A673 (cell line): ENCODE measurements at regions of chr9 and their contacts with region 1.

Region 1: GRCh38 chr9:38362852-38363593 is 29.5 kb upstream of the ALDH1B1 start:
- DNase-seq: peak; percentile 69
- H3K4me3 ChIP-seq: no peak overlapping the region
- H3K27ac ChIP-seq: no peak overlapping the region
- H3K4me1 ChIP-seq: no peaks in the 10 kb centered on the region
- H3K27me3 ChIP-seq: no peaks in the 10 kb centered on the region
- CTCF ChIP-seq: peak; percentile 72

Region 2: DNA sequence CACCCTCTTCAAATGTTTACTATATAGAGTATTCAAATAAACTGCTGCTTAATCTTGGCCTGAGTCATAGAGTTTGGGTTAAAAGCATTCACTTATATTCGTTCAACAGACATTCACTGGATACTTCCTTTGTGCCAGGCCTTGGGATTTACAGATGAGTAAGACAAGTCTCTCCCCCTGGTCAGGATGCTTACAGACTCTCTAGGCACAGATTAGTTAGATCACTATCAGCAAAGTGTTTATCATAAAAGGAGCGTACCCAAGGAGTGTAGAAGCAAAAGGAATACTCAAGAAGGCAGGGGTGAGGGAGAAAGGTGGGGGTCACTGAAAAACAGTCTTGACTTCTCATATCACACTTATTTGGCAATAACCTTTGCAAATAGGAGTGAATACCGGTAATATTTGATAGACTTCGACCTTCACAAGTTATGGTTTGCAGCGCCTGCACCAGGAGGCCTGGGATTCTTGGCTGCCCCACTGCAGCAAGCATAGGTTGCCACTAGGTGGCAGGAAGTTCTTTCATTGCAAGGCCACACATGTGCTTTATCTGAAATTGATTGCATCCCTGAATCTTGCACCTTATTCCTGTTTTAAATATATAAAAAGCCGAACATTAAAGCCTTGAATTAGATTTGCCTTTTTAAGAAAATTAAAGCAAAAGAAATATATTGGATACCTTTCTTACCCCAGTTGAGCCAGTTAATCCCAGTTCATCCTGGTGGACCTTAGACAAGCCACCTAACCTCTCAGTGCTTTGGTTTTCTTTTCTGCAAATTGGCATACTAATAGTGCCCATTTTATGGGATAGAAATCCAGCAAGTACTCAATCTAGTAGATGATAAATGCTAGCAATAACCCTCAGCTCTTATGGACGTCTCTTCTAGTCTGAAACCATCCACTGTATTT is 615.9 kb before region 1 on chr9:
- CTCF ChIA-PET with region 1: interaction called, 3 read pairs
- POLR2A ChIA-PET with region 1: no interaction called
- intact Hi-C with region 1: loop called (anchors 5 kb)
- DNase-seq: peak; percentile 74
- H3K4me3 ChIP-seq: no peak overlapping the region
- H3K27ac ChIP-seq: no peak overlapping the region
- H3K4me1 ChIP-seq: no peaks in the 10 kb centered on the region
- H3K27me3 ChIP-seq: no peaks in the 10 kb centered on the region
- CTCF ChIP-seq: peak; percentile 94

Region 3: GRCh38 chr9:38088006-38088925 is 274.8 kb before region 1 on chr9:
- CTCF ChIA-PET with region 1: no interaction called
- POLR2A ChIA-PET with region 1: no interaction called
- intact Hi-C with region 1: loop called (anchors 5 kb)
- DNase-seq: peak; percentile 50
- H3K4me3 ChIP-seq: no peak overlapping the region
- H3K27ac ChIP-seq: no peak overlapping the region
- H3K4me1 ChIP-seq: no peaks in the 10 kb centered on the region
- H3K27me3 ChIP-seq: no peaks in the 10 kb centered on the region
- CTCF ChIP-seq: peak; percentile 99

Region 4: GRCh38 chr9:38141746-38142591 is 221.1 kb before region 1 on chr9:
- CTCF ChIA-PET with region 1: no interaction called
- POLR2A ChIA-PET with region 1: no interaction called
- intact Hi-C with region 1: loop called (anchors 10 kb)
- DNase-seq: peak; percentile 29
- H3K4me3 ChIP-seq: no peak overlapping the region
- H3K27ac ChIP-seq: no peak overlapping the region
- H3K4me1 ChIP-seq: no peaks in the 10 kb centered on the region
- H3K27me3 ChIP-seq: peaks cover 36% of the 10 kb centered on the region
- CTCF ChIP-seq: no peak

Region 5: DNA sequence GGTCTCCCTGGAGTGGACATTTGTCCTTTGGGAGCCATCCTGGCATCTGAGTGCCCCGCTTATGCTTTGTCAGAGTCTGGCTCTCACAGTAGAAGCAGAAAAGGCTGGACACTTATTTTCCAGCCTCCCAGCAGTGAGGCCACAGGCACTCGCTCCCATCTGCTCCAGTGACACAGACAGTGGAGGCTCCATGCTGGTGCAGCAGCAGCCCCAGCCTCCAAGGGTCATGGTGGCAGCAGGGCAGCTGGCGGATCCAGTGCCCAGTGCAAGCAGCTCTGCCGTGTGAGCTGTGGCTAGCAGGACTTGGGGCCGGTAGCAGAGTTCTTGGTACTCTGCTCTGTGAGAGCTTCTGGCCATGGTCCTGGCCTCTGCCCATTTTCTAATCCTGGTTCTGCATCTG is 127.8 kb before region 1 on chr9:
- CTCF ChIA-PET with region 1: no interaction called
- POLR2A ChIA-PET with region 1: no interaction called
- intact Hi-C with region 1: no loop called
- DNase-seq: no peak
- H3K4me3 ChIP-seq: no peak overlapping the region
- H3K27ac ChIP-seq: no peak overlapping the region
- H3K4me1 ChIP-seq: no peaks in the 10 kb centered on the region
- H3K27me3 ChIP-seq: no peaks in the 10 kb centered on the region
- CTCF ChIP-seq: no peak

Region 6: DNA sequence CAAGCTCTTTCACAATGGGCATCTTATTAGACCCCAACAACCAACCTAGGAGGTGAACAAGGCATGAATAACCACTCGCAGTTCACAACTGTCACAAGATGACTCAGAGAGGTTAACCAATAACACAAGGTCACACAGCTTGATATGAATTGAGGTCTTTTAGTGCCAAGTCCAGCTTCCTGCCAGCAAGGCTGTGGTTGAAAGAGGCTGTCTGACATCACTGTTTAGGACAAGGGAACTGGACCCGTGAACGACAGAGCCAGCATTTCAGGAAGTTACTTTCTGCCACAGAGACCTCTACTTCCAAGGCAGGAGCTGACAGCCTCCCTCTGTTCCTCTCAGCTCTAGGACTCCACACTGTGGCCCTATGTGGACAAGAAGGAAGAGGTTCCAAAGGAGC is 23.9 kb before region 1 on chr9:
- CTCF ChIA-PET with region 1: no interaction called
- POLR2A ChIA-PET with region 1: no interaction called
- intact Hi-C with region 1: no loop called
- DNase-seq: no peak
- H3K4me3 ChIP-seq: no peak overlapping the region
- H3K27ac ChIP-seq: no peak overlapping the region
- H3K4me1 ChIP-seq: no peaks in the 10 kb centered on the region
- H3K27me3 ChIP-seq: no peaks in the 10 kb centered on the region
- CTCF ChIP-seq: no peak